IMR-90 (cell line): ENCODE measurements at regions of chr4 and their contacts with region 1.

Region 1: GRCh38 chr4:36681661-36682060 is 400.2 kb downstream of the DTHD1 start:
- DNase-seq: no peak
- ATAC-seq: no peak
- H3K4me3 ChIP-seq: no peak overlapping the region
- H3K27ac ChIP-seq: no peak overlapping the region
- H3K4me1 ChIP-seq: no peaks in the 10 kb centered on the region
- H3K27me3 ChIP-seq: no peaks in the 10 kb centered on the region
- CTCF ChIP-seq: no peak
- POLR2A ChIP-seq: no peak
- RAD21 ChIP-seq: no peak

Region 2: GRCh38 chr4:36722986-36723385 is 41.3 kb after region 1 on chr4:
- CTCF ChIA-PET with region 1: no interaction called
- POLR2A ChIA-PET with region 1: interaction called, 11 read pairs
- dilution Hi-C with region 1: no loop called
- in situ Hi-C with region 1: no loop called
- intact Hi-C with region 1: no loop called
- DNase-seq: no peak
- ATAC-seq: no peak
- H3K4me3 ChIP-seq: no peak overlapping the region
- H3K27ac ChIP-seq: no peak overlapping the region
- H3K4me1 ChIP-seq: no peaks in the 10 kb centered on the region
- H3K27me3 ChIP-seq: no peaks in the 10 kb centered on the region
- CTCF ChIP-seq: no peak
- POLR2A ChIP-seq: no peak
- RAD21 ChIP-seq: no peak

Region 3: DNA sequence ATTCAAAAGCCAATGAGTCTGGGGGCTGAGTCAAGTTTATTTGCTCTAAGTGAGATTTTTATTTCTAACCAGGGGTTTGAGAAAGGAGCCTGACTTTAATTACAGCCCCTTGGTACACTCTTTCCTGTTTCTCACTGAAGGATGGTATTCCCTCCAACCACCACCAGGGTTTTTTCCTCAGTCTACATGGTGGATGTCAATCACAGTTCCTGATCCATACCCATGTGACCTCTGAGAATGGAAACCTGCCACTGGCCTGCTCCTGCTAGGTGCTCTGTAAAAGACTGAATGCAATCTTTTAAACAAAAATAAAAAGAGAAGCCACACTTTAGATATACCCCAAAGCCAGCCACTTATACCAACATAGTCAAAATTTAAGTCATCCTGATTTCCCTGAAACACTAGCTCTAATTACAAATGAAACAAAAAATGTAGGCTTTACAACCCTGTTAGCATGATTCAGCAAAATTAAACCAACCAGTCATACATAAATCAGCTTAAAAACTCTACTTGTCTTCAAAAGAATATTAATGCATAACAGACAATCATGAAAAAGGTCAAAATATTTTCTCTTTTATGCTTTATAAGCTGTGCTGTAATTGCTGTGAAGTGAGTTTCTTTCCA is 450.8 kb after region 1 on chr4:
- CTCF ChIA-PET with region 1: no interaction called
- POLR2A ChIA-PET with region 1: no interaction called
- dilution Hi-C with region 1: no loop called
- in situ Hi-C with region 1: no loop called
- intact Hi-C with region 1: no loop called
- DNase-seq: no peak
- ATAC-seq: no peak
- H3K4me3 ChIP-seq: no peak overlapping the region
- H3K27ac ChIP-seq: no peak overlapping the region
- H3K4me1 ChIP-seq: no peaks in the 10 kb centered on the region
- H3K27me3 ChIP-seq: no peaks in the 10 kb centered on the region
- CTCF ChIP-seq: no peak
- POLR2A ChIP-seq: no peak
- RAD21 ChIP-seq: no peak